A549 (cell line): ENCODE measurements at regions of chr20 and their contacts with region 1.

Region 1: DNA sequence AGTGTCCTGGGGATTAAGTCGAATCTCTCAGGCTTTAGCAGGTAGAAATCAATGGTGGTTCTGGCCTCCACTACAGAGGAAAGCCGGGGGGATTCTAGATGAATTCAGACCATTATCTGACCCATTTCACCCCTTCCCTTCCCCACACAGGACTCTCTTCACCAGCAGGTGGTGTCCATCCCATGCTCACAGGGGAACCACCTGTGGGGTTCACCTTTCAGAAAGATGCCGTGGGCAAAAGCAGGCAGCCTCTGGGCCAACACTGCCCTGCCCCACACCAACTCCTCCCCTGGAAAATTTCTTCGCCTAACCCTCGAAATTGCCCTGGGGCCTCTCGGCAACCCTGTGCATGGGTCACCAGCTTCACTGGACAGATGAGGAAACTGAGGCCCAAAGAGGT is 123.8 kb upstream of the GGTLC1 start:
- DNase-seq: no peak
- ATAC-seq: no peak
- H3K4me3 ChIP-seq: no peak overlapping the region
- H3K27ac ChIP-seq: 0 out of 6 replicates have a peak overlapping the region, but pooled peaks of 1 of the 2 experiments have one; percentile 1
- H3K4me1 ChIP-seq: no peaks in the 10 kb centered on the region
- CTCF ChIP-seq: no peak
- EP300 ChIP-seq: no peak
- POLR2A ChIP-seq: no peak
- RAD21 ChIP-seq: no peak

Region 2: GRCh38 chr20:24079661-24080412 is 32.6 kb before region 1 on chr20:
- CTCF ChIA-PET with region 1: no interaction called
- POLR2A ChIA-PET with region 1: no interaction called
- DNase-seq: no peak
- ATAC-seq: no peak
- H3K4me3 ChIP-seq: no peak overlapping the region
- H3K27ac ChIP-seq: no peak overlapping the region
- H3K4me1 ChIP-seq: no peaks in the 10 kb centered on the region
- CTCF ChIP-seq: no peak
- EP300 ChIP-seq: no peak
- POLR2A ChIP-seq: no peak
- RAD21 ChIP-seq: no peak

Region 3: DNA sequence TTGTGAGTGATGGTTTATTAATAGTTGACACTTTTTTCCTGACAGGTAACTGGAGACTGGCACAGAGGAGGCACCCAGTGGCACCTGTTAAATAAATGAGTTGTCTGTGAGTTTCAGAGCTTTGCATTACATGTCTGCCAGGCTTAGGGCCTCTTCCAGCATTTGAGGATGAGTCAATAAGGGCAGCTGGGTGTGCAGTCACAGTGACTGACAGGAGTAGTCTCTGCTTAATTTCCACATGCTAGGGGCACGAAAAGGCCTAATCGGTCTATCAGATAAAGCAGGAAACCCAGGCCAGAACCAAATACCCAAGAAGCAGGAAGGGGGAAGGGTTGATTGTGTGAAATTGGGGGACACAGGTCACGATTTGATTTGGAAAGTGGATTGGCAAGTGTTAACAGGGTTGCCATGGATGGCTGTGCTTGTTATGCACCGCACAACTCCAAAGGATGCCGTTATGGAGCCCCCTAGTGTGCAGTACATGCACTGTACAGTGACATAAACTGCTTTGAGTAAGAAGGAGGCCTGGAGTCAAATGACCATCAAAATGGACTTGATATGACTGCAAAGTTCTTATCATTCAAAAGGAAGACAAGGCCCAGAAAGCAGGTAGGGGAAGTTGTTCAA is 11.9 kb before region 1 on chr20:
- CTCF ChIA-PET with region 1: interaction called, 14 read pairs
- POLR2A ChIA-PET with region 1: no interaction called
- DNase-seq: peak in 1 of 2 experiments; percentile 77
- ATAC-seq: peak; percentile 76 to 88
- H3K4me3 ChIP-seq: no peak overlapping the region
- H3K27ac ChIP-seq: peak overlapping the region in 1 of 2 experiments; percentile 27; a peak in 1 of 6 replicates
- H3K4me1 ChIP-seq: peaks cover 41% of the 10 kb centered on the region
- CTCF ChIP-seq: peak; percentile 58
- EP300 ChIP-seq: no peak
- POLR2A ChIP-seq: no peak
- RAD21 ChIP-seq: peak; percentile 29 to 63; a peak in 3 of 5 replicates

Region 4: DNA sequence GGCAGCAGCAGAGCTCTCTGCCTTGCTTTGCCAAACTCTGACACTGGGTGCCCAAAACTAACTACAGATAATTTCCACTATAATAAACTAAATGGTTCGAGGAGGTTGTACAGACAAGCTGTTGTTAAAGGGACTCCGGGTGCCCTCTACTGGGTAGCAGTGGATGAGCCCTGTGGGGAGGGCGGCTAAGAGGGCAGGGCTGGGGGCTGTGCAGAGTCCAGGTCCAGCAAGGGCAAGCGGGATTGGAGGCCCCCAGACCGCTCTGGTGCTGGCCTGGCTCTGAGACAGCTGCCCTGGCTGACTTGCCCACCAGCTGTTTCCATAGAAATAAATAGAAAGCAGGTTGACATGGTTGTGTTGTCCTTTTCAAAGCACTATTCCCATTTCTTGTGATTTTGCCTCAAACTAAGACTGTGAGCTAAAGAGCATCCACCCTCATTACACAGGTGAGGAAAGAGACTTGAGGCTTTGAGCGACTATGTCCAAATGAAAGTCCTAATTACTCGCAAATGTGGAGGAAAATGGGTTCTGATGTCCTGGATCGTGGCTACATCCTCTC is 669.1 kb after region 1 on chr20:
- CTCF ChIA-PET with region 1: no interaction called
- POLR2A ChIA-PET with region 1: no interaction called
- DNase-seq: peak; percentile 40 to 51
- ATAC-seq: peak; percentile 84 to 93
- H3K4me3 ChIP-seq: no peak overlapping the region
- H3K27ac ChIP-seq: peak overlapping the region in 1 of 2 experiments; percentile 20; a peak in 1 of 6 replicates
- H3K4me1 ChIP-seq: no peaks in the 10 kb centered on the region
- CTCF ChIP-seq: peak; percentile 69
- EP300 ChIP-seq: no peak
- POLR2A ChIP-seq: no peak
- RAD21 ChIP-seq: peak; percentile 91 to 92